Sigmoid colon (tissue), 7 donors: ENCODE measurements at regions of chr14 and their contacts with region 1.

Region 1: GRCh38 chr14:31992011-31992447 is 85.1 kb upstream of the ARHGAP5 start:
- DNase-seq: no peak
- H3K4me3 ChIP-seq: no peak overlapping the region
- H3K27ac ChIP-seq: peak overlapping the region; percentile 4 to 73 (median 48)
- H3K4me1 ChIP-seq: peaks cover 0 to 50% (median 38%) of the 10 kb centered on the region in 4 donors
- H3K27me3 ChIP-seq: no peaks in the 10 kb centered on the region
- CTCF ChIP-seq: no peak
- EP300 ChIP-seq: peak; percentile 52 to 93 (median 80)
- POLR2A ChIP-seq: no peak

Region 2: GRCh38 chr14:32560209-32560857 is 568.3 kb after region 1 on chr14:
- intact Hi-C with region 1: loop called (anchors 5 kb)
- DNase-seq: peak; percentile 69
- H3K4me3 ChIP-seq: no peak overlapping the region
- H3K27ac ChIP-seq: peak overlapping the region; percentile 53 to 84 (median 74)
- H3K4me1 ChIP-seq: peaks cover 0 to 51% (median 43%) of the 10 kb centered on the region in 4 donors
- H3K27me3 ChIP-seq: no peaks in the 10 kb centered on the region
- CTCF ChIP-seq: peak; percentile 81 to 91 (median 90)
- EP300 ChIP-seq: no peak
- POLR2A ChIP-seq: no peak